ENCODE measurements at regions of chr17 and their contacts with region 1.

Region 1: GRCh38 chr17:57271821-57272220 is 15.5 kb downstream of the MSI2 start:
- DNase-seq: no peak
- ATAC-seq: no peak
- H3K4me3 ChIP-seq: no peak overlapping the region
- H3K27ac ChIP-seq: no peak overlapping the region
- H3K4me1 ChIP-seq: peaks cover 33% of the 10 kb centered on the region
- H3K27me3 ChIP-seq: no peaks in the 10 kb centered on the region
- CTCF ChIP-seq: no peak
- EP300 ChIP-seq: no peak
- POLR2A ChIP-seq: no peak
- RAD21 ChIP-seq: no peak

Region 2: DNA sequence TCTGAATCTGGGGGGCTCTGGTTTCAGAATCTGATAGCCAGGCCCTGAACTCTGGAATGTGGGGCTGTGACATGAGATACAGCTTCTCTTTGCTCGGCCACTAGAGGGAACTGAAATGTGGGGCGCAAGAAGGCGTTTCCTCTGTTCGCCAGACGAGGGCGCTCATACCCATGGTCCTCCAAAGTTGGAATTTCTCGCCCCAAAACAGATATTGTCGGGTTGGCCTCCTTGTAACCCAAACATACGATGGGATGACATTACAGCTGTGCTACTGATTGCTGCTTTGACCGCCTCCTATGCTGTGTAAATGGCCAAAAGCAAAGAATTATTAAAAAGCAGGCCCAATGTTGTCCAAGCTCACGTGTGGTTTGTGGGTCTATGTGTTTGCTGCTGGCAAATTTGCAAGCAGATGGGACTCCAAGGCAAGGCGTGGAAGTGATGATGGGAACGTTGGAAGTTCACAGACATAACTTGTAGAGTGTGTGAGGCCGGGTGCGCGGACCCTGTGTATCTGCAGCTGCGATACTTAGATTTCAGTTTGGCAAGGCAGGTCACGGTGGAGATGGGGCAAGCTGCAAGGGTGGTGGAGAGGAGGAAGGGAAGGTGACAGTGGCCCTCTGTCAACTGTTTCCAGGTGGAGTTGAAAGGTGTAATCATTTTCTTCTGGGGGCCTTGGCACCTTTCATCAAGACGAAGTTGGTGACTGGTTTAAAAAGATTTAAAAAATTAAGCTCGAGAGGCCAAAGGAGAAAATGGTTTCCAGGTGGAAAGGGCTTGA is 28.5 kb before region 1 on chr17:
- CTCF ChIA-PET with region 1: no interaction called
- POLR2A ChIA-PET with region 1: no interaction called
- in situ Hi-C with region 1: no loop called
- intact Hi-C with region 1: no loop called
- DNase-seq: peak; percentile 70
- ATAC-seq: peak; percentile 94
- H3K4me3 ChIP-seq: no peak overlapping the region
- H3K27ac ChIP-seq: no peak overlapping the region
- H3K4me1 ChIP-seq: peaks cover 10% of the 10 kb centered on the region
- H3K27me3 ChIP-seq: no peaks in the 10 kb centered on the region
- CTCF ChIP-seq: peak; percentile 99
- EP300 ChIP-seq: no peak
- POLR2A ChIP-seq: no peak
- RAD21 ChIP-seq: peak; percentile 98

Region 3: DNA sequence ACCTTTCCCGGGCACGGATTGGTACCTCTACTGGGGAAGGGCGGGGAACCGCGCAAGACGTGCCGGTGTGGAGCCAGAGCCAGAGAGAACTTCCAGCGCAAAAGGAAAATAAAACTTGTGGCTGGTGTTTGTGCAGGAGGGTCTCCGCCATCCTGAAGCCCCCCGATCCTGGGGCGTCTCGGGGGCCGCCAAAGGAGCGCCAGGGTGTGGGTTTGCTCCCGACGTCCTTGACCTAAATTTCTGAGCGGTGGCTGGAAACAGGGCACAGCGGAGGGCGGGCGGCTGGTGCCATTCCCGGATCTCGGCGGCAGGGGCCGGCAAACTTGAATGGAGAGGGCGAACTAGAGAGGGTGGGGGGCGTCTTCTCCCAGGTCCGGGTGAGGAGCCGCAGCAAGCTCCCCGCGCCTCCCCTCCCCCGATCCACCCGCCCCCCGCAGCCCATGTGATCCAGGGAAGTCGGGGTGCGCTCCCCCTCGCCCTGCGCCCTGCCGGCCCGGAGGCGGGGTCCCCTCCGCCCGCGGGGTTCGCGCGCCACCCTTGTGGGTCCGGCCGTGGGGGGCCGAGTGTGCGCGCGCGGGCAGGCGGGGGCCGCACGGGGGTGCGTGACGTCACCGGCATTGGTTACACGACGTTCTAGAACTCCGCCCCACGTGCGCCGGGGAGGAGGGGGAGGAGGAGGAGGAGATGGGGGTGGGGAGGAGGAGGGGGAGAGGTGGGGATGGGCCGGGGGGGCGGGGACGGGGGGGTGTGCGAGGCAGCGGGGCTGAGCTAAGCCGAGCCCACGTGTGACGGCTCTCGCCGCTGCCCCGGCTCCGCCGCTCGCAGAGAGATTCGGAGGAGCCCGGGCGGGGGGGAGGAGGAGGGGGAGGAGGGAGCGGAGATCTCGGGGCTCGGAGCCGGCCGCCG is 15.8 kb before region 1 on chr17 and contains the start of gene MSI2:
- CTCF ChIA-PET with region 1: no interaction called
- POLR2A ChIA-PET with region 1: interaction called, 13 read pairs
- in situ Hi-C with region 1: no loop called
- intact Hi-C with region 1: no loop called
- DNase-seq: peak; percentile 76
- ATAC-seq: peak; percentile 83
- H3K4me3 ChIP-seq: peak within 1 kb of the TSS; percentile 75 to 95 (median 79)
- H3K27ac ChIP-seq: peak within 1 kb of the TSS; percentile 63
- H3K4me1 ChIP-seq: peaks cover 54% of the 10 kb centered on the region
- H3K27me3 ChIP-seq: no peaks in the 10 kb centered on the region
- CTCF ChIP-seq: no peak
- EP300 ChIP-seq: no peak
- POLR2A ChIP-seq: peak in 1 of 2 experiments; percentile 51; a peak in 2 of 4 replicates
- RAD21 ChIP-seq: no peak
- total RNA-seq, gene MSI2: 68.1 and 78.4 TPM in 2 replicates

Region 4: DNA sequence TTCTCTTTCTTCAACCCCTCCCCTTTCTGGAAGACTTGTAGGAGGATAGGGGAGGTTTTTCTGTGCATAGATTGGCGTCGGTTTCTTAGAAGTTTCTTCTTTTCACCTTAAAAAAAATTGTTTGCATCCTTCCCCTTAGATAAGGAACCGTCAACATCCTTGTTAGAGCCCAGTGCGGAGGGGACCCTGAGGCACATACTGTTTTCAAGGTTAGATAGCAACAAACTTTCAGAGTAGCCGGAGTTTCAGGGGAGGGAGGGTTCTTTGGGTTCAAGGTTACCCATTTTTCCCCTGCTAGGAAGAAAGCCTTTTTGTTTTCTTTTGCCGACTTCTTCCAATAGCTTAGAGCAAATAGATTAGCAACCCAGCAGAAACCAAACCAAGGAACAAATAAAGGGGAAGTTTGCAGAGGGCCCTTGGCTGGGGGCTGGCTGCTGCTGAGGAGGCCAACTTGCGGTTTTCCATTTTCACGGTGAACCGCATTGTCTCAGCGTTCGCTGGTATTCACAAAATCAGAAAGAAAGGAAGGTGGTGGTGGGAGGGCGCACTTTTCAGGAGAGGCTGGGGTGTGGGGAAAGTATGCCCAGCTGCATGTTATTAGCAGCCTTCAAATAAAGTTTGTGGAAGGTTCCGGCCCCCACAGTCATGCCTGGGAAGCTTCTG is 13.3 kb after region 1 on chr17:
- CTCF ChIA-PET with region 1: no interaction called
- POLR2A ChIA-PET with region 1: no interaction called
- in situ Hi-C with region 1: no loop called
- intact Hi-C with region 1: no loop called
- DNase-seq: peak; percentile 65
- ATAC-seq: peak; percentile 49
- H3K4me3 ChIP-seq: peak overlapping the region in 1 of 3 experiments; percentile 30; a peak in 1 of 6 replicates
- H3K27ac ChIP-seq: peak overlapping the region; percentile 54
- H3K4me1 ChIP-seq: peaks cover 58% of the 10 kb centered on the region
- H3K27me3 ChIP-seq: no peaks in the 10 kb centered on the region
- CTCF ChIP-seq: no peak
- EP300 ChIP-seq: peak in 1 of 2 experiments; percentile 78; a peak in 2 of 4 replicates
- POLR2A ChIP-seq: no peak
- RAD21 ChIP-seq: no peak

Measured in HepG2 (cell line).